Ovary (tissue), 10 donors: ENCODE measurements at regions of chr9 and their contacts with region 1.

Region 1: DNA sequence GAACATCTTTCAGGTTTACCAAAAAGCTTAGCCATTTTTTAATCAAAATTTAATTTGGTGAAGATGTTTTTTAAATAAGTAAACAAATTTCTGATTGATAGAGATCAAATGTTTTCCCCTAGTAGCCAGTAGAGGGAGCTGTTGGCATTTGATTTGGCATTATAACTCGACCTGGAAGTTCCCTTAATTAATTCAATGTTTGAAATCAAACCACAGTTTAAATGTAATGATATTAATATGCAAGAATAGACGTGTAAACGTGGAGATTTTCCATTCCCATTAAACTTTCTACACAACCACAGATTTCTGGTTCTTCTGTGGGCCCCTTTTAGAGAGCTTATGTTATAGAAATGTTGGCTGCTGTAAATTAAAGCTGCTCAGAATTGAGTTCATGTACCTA is 148.1 kb upstream of the MPDZ start:
- DNase-seq: no peak
- H3K4me3 ChIP-seq: no peak overlapping the region
- H3K27ac ChIP-seq: no peak overlapping the region
- H3K4me1 ChIP-seq: no peaks in the 10 kb centered on the region
- H3K27me3 ChIP-seq: no peaks in the 10 kb centered on the region
- CTCF ChIP-seq: peak; percentile 60 to 81 (median 71)
- EP300 ChIP-seq: no peak
- POLR2A ChIP-seq: no peak

Region 2: DNA sequence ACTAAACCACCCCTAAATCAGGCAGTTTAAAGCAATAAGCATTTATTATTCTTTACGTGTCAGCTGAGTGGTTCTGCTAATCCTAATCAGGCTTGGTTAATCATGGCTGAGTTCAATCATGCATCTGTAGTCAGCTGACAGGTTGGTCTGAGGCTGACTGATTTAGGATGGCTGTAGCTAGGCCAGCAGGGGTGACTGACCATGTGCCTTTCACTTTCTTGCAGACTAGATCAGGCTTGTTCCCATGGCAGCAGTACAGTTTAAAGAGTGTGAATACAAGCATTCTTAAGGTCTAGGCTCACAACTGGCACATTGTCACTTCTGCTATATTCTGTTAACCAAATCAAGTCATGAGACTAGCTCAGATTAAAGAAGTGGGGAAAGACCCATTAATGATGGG is 132.0 kb before region 1 on chr9:
- intact Hi-C with region 1: no loop called
- DNase-seq: no peak
- H3K4me3 ChIP-seq: no peak overlapping the region
- H3K27ac ChIP-seq: no peak overlapping the region
- H3K4me1 ChIP-seq: no peaks in the 10 kb centered on the region
- H3K27me3 ChIP-seq: no peaks in the 10 kb centered on the region
- CTCF ChIP-seq: no peak
- EP300 ChIP-seq: no peak
- POLR2A ChIP-seq: no peak

Region 3: DNA sequence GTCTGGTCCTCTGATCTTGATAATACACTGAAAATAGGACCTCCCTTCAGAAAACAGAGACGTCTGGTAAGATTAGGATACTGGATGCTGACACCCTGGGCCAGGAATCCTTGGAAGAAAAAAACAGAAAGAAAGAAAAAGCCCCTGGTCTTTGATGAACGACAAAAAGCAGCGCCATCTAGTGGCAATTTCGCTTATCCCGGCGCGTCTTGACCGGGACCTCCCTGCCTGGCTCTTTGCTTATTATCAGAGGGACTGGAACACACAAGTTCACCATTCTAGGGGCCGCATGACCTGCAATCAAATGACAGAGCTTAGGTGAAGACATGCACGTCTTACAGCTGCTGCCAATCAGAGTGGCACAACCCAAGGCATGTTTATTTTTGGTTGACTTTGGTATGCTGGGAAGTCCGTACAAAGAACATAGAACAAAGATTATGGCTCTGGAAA is 1001.2 kb after region 1 on chr9:
- intact Hi-C with region 1: loop called in 1 of 4 experiments (anchors 5 kb)
- DNase-seq: peak; percentile 65 to 81 (median 73)
- H3K4me3 ChIP-seq: no peak overlapping the region
- H3K27ac ChIP-seq: no peak overlapping the region
- H3K4me1 ChIP-seq: peaks cover 2% of the 10 kb centered on the region
- H3K27me3 ChIP-seq: no peaks in the 10 kb centered on the region
- CTCF ChIP-seq: peak; percentile 30 to 56 (median 44)
- EP300 ChIP-seq: no peak
- POLR2A ChIP-seq: no peak